ENCODE measurements at regions of chr1 and their contacts with region 1.

Region 1: DNA sequence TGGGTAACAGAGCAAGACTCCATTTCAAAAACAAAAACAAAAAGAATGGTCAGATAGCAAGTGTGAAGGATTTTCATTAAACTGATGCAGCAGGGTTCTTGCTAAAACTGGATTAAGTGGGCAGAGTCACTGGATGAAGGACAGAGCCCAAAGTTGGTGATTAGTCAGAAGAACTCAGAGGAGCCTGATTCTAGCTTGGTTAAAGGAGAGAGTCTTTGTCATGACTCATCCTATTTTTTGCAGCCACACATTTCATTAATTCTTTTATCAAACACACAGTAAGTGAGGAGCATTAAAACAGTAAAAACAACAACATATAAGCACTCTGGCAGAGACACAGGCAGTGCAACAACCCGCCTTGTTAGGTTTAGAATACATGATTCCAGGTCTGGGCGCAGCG is 56.0 kb upstream of the EDARADD start:
- DNase-seq: no peak
- ATAC-seq: no peak
- H3K4me3 ChIP-seq: no peak overlapping the region
- H3K27ac ChIP-seq: no peak overlapping the region
- H3K4me1 ChIP-seq: no peaks in the 10 kb centered on the region
- H3K27me3 ChIP-seq: peaks cover 0 to 2% (median 0%) of the 10 kb centered on the region in 3 donors
- CTCF ChIP-seq: no peak

Region 2: GRCh38 chr1:236394905-236395780 is 57.0 kb after region 1 on chr1:
- intact Hi-C with region 1: loop called in 1 of 2 experiments (anchors 10 kb)
- DNase-seq: peak in 1 of 2 donors; percentile 18
- ATAC-seq: no peak
- H3K4me3 ChIP-seq: peak overlapping the region; percentile 63
- H3K27ac ChIP-seq: no peak overlapping the region
- H3K4me1 ChIP-seq: no peaks in the 10 kb centered on the region
- H3K27me3 ChIP-seq: peaks cover 4 to 45% (median 19%) of the 10 kb centered on the region in 3 donors
- CTCF ChIP-seq: no peak